Natural killer cell (primary cell): ENCODE measurements at regions of chr3 and their contacts with region 1.

Region 1: DNA sequence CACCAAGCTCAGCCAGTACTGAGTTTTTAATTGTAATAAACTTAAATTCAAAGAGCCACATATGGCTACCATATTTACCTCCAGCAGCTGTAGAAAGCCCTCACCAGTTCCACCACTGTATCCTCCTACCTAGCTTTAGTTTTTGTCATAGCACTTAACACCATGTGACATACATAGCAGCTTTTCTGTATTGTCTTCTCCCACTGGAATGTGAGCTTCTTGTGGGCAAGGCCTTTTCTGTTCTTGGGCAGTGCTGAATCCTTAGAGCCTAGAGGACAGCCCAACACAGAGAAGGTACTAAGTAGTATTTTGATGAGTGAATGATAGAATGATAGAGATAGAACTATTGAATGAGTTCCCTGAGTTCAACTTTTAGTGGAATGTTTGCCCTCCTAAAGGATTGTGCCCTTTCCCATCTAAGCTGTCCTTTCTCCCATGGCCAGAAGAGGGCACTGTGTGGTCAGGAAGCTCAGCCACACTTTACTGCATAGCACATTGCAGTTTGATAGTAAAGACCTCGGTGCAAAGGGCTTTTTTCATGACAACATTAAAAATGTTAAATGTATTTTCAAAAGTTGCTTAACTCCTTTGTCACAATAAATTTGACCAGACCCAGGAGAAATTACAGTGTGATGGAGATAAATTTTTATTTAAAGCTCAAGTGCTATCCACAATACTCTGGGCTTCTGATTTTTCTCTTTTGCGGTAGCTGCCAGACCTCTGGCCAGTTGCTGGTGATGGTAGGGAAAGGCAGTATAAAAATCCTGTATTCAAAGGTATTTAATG is 115.8 kb downstream of the GHSR start:
- DNase-seq: peak; percentile 38 to 77
- ATAC-seq: peak; percentile 92 to 97 (median 97)
- H3K4me3 ChIP-seq: no peak overlapping the region
- H3K4me3 Mint-ChIP-seq: no peak overlapping the region
- H3K27ac ChIP-seq: no peak overlapping the region
- H3K27ac Mint-ChIP-seq: peak overlapping the region; percentile 42 to 69
- H3K4me1 ChIP-seq: no peaks in the 10 kb centered on the region
- H3K4me1 Mint-ChIP-seq: peaks cover 16 to 17% of the 10 kb centered on the region in 2 donors
- H3K27me3 ChIP-seq: no peaks in the 10 kb centered on the region
- H3K27me3 Mint-ChIP-seq: no peaks in the 10 kb centered on the region
- CTCF ChIP-seq: peak; percentile 81

Region 2: DNA sequence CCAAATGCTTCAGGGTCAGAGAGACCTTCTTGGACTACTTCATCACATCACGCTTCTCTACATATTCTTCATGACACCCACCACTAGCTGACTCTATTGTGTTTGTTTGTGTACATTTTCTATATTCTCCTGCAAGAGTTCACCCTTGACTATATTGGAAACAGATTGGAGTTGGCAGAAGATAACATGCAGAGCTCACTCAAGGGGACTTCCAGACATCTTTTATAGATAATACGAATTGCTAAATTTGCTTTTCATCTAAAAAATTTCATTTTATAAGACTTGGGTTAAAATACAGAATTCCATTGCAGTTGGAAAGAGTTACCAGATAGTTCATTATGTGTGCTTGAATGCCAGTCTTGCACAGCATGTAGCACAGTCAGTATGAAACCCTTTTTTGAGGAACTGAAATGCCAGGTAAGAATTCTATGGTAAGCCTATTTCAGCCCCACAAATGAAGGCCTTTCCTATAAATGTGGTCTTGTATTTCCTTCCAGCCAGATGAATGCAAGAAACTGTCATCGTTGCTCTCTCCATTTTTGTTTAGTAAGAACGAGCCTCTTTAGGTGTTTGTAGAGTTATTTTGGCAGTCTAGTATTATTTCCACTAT is 61.8 kb before region 1 on chr3:
- intact Hi-C with region 1: no loop called
- DNase-seq: no peak
- ATAC-seq: no peak
- H3K4me3 ChIP-seq: no peak overlapping the region
- H3K4me3 Mint-ChIP-seq: no peak overlapping the region
- H3K27ac ChIP-seq: no peak overlapping the region
- H3K27ac Mint-ChIP-seq: no peak overlapping the region
- H3K4me1 ChIP-seq: no peaks in the 10 kb centered on the region
- H3K4me1 Mint-ChIP-seq: peaks cover 33 to 65% of the 10 kb centered on the region in 2 donors
- H3K27me3 ChIP-seq: no peaks in the 10 kb centered on the region
- H3K27me3 Mint-ChIP-seq: no peaks in the 10 kb centered on the region
- CTCF ChIP-seq: no peak

Region 3: DNA sequence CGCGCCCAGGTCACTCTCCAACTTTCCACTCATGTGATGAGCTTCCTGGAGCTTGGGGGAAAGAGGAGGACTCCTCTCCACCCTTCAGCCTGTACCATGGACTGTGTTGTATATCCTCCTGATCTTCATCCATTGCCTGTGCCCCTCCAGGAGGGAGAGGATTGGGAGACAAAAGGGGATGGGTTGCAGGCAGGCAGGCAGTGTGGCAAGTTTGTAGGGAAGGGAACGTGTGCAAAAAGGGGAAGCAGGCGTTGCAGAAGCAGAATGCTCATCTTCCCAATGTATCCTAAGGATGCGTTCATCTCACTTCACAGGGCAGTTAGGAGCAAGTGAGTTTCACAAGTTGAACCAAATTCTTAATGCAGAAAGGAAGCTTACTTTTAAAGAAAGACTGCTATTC is 143.9 kb after region 1 on chr3:
- intact Hi-C with region 1: loop called (anchors 2 kb)
- DNase-seq: no peak
- ATAC-seq: no peak
- H3K4me3 ChIP-seq: no peak overlapping the region
- H3K4me3 Mint-ChIP-seq: peak overlapping the region; percentile 97
- H3K27ac ChIP-seq: no peak overlapping the region
- H3K27ac Mint-ChIP-seq: no peak overlapping the region
- H3K4me1 ChIP-seq: no peaks in the 10 kb centered on the region
- H3K4me1 Mint-ChIP-seq: peaks cover 12 to 15% of the 10 kb centered on the region in 2 donors
- H3K27me3 ChIP-seq: no peaks in the 10 kb centered on the region
- H3K27me3 Mint-ChIP-seq: peaks cover 5 to 6% of the 10 kb centered on the region in 2 donors
- CTCF ChIP-seq: no peak

Region 4: DNA sequence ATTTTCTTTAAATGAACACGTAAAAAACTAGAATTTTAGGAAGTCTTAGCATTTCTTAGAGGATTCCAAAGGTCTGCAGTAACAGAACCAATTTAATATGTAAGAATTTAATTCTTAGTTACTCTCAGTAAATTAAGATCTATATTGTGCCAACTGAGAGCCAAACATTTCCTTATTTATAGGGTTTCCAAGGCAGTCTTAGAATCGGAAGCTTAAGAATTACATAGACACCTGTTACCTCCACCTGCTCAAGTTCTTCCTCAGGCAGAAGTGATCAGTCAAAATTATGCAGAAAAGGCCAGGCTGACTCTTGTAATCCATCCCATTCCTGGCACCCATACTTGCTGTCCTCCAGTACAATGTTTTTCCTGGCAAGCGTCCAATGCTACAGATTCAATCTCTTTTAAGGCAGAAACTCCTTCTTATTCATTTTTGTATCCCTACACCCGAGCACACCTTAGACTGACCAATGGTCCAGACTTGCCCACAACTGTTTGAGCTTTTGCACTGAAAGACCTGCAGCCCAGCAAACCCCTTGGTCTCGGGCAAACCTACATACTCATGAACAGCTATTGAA is 314.1 kb after region 1 on chr3:
- intact Hi-C with region 1: no loop called
- DNase-seq: no peak
- ATAC-seq: no peak
- H3K4me3 ChIP-seq: no peak overlapping the region
- H3K4me3 Mint-ChIP-seq: no peak overlapping the region
- H3K27ac ChIP-seq: no peak overlapping the region
- H3K27ac Mint-ChIP-seq: no peak overlapping the region
- H3K4me1 ChIP-seq: no peaks in the 10 kb centered on the region
- H3K4me1 Mint-ChIP-seq: peaks cover 3 to 6% of the 10 kb centered on the region in 2 donors
- H3K27me3 ChIP-seq: no peaks in the 10 kb centered on the region
- H3K27me3 Mint-ChIP-seq: no peaks in the 10 kb centered on the region
- CTCF ChIP-seq: no peak

Region 5: DNA sequence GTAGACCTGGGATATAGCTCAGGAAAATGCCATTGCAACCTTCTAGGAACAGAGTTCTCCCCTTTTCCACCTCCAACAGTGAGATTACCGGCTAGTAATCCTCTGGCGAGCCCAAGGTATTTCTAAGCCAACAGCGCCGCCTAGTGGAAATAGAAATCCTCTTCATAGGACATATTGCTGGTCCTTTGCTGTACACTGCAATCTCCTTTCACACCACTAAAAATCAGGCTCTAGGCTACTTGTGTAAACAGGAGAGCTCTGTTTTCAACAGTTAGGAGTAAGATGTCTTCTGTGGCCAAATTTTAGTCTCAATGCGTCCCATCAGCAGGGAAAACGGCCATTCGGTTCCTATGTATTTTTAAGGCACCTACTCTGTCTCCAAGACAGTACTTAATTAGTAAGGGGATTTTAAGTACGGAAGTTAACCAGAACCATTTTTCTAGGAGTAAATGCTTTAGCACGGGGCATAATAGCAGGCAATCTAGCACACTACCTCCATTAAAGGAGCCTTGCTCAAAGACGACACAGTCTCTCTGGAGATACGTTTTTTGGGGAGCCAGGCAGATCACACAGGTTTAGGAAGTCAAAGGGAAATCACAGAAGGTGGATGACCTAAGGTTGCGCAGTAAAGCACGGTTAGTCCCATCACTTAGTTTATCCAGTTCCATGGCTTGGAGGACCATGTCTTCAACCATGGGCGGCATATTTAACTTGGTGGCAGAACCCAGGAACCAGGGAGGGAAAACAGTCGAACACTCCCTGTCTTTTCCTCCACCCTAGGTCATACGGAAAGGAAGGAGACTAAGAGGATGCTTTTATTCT is 334.6 kb after region 1 on chr3:
- intact Hi-C with region 1: loop called (anchors 1 kb)
- DNase-seq: peak; percentile 68 to 87
- ATAC-seq: peak; percentile 95 to 99 (median 99)
- H3K4me3 ChIP-seq: no peak overlapping the region
- H3K4me3 Mint-ChIP-seq: peak overlapping the region; percentile 87
- H3K27ac ChIP-seq: no peak overlapping the region
- H3K27ac Mint-ChIP-seq: peak overlapping the region; percentile 84 to 85
- H3K4me1 ChIP-seq: peaks cover 21% of the 10 kb centered on the region
- H3K4me1 Mint-ChIP-seq: peaks cover 38 to 44% of the 10 kb centered on the region in 2 donors
- H3K27me3 ChIP-seq: no peaks in the 10 kb centered on the region
- H3K27me3 Mint-ChIP-seq: no peaks in the 10 kb centered on the region
- CTCF ChIP-seq: peak; percentile 82